Activated CD4-positive, alpha-beta T cell treated with anti-CD3 and anti-CD28 coated beads for 36 hours (primary cell): ENCODE measurements at regions of chr11 and their contacts with region 1.

Region 1: DNA sequence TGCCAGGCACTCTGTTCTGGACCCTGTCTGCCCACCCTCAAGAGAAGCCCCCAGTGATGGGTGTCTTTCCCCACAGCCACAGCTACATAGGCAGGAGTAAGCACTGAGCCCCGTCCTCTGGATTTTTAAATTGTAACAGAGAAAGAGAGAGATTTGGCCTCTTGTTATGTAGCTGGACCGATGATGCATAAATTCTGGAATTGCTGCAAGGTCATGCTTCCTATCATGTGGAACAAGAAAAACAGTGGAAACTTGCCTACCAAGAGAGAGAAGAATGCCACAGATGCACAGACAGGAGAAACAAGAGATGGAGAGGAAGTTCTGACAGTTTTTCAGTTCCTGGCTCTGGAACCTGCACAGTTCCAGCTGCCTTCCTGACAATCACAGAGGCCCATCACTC is 150.2 kb downstream of the ETS1 start:
- DNase-seq: no peak
- ATAC-seq: no peak
- H3K4me3 Mint-ChIP-seq: no peak overlapping the region
- H3K27ac Mint-ChIP-seq: no peak overlapping the region
- H3K4me1 Mint-ChIP-seq: peaks cover 15% of the 10 kb centered on the region
- H3K27me3 Mint-ChIP-seq: no peaks in the 10 kb centered on the region

Region 2: DNA sequence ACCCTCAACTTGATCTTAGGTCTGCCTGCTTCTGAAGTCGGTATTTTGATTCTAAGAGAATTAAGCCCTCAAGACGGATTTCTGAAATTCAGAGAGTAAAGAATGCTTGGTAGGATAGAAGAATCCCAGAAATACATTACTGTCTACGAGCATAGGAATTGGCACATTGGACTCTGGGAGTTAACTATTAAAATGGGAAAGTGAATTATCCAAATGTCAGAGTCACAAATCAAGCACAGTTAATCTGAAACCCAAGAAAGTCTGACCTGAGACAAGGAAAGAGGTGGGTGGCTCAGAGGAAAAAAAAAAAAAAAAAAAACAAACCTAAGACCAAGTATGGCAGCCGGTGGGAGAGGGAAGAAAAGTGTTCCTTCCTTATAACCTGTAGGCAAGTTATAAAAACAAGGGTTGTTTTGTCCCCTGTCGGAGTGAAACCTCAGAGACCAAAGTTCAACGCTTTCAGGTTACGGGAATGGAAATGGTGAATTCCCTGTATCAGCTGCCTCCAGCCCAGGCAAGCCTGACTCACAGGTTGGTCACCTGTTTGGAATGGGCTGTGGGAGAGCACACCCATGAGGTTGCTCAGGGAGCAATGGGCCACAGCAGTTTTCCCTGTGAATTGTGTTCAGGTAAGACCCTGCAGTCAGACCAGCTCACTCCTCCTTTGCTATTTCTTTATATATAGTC is 11.2 kb after region 1 on chr11:
- CTCF ChIA-PET with region 1: interaction called, 5 read pairs
- POLR2A ChIA-PET with region 1: no interaction called
- intact Hi-C with region 1: loop called (anchors 1 kb)
- DNase-seq: no peak
- ATAC-seq: peak; percentile 17
- H3K4me3 Mint-ChIP-seq: no peak overlapping the region
- H3K27ac Mint-ChIP-seq: peak overlapping the region; percentile 59
- H3K4me1 Mint-ChIP-seq: peaks cover 57% of the 10 kb centered on the region
- H3K27me3 Mint-ChIP-seq: no peaks in the 10 kb centered on the region